ENCODE measurements at regions of chr3 and their contacts with region 1.

Region 1: GRCh38 chr3:189394599-189395121 is 222.9 kb downstream of the TPRG1 start:
- DNase-seq: no peak
- H3K4me3 Mint-ChIP-seq: no peak overlapping the region
- H3K27ac Mint-ChIP-seq: no peak overlapping the region
- H3K4me1 Mint-ChIP-seq: peaks cover 32% of the 10 kb centered on the region
- H3K27me3 Mint-ChIP-seq: no peaks in the 10 kb centered on the region
- CTCF ChIP-seq: no peak

Region 2: GRCh38 chr3:189276481-189277219 is 118.0 kb before region 1 on chr3:
- CTCF ChIA-PET with region 1: interaction called, 6 read pairs
- POLR2A ChIA-PET with region 1: interaction called, 19 read pairs
- intact Hi-C with region 1: no loop called
- DNase-seq: peak; percentile 95
- H3K4me3 Mint-ChIP-seq: peak overlapping the region; percentile 30
- H3K27ac Mint-ChIP-seq: peak overlapping the region; percentile 50
- H3K4me1 Mint-ChIP-seq: peaks cover 41% of the 10 kb centered on the region
- H3K27me3 Mint-ChIP-seq: no peaks in the 10 kb centered on the region
- CTCF ChIP-seq: no peak

Region 3: DNA sequence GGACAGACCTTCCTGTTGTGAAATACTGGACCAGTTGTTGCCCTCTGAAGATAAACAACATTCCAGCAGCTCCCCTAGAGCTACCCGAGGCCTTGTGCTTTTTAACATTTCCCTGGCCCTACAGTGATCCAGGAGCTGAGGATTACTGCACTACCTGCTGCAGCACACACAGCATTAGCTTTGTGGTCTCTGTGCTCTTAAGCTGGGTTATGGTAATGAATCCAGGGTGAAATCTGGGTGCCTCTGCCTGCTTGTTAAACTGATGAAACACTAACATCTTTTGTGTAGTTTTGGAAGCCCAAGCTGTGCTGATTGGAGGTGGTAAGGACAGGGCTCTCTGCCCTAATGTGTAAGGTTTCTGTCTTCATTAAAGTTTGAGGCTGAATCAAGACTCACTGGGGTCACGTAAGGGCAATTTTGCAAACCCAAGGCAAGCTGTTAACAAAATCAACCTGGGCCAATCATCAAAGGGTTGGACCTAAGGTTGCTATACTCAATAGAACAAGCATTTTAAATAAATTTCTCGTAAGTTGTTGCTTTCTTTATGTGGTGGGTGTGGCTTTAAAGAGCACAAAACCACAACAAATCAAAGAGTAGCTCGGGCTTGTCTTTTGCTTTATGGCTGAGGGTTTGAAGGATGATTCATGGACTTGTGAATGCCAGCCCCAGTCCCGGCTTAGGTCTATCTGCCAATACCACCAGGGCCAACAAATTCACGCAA is 39.0 kb before region 1 on chr3:
- CTCF ChIA-PET with region 1: interaction called, 9 read pairs
- POLR2A ChIA-PET with region 1: interaction called, 72 read pairs
- intact Hi-C with region 1: loop called (anchors 2 kb)
- DNase-seq: peak; percentile 93
- H3K4me3 Mint-ChIP-seq: no peak overlapping the region
- H3K27ac Mint-ChIP-seq: peak overlapping the region; percentile 96
- H3K4me1 Mint-ChIP-seq: peaks cover 36% of the 10 kb centered on the region
- H3K27me3 Mint-ChIP-seq: no peaks in the 10 kb centered on the region
- CTCF ChIP-seq: no peak

Region 4: GRCh38 chr3:189488241-189488767 is 93.6 kb after region 1 on chr3:
- CTCF ChIA-PET with region 1: no interaction called
- POLR2A ChIA-PET with region 1: interaction called, 22 read pairs
- intact Hi-C with region 1: loop called (anchors 5 kb)
- DNase-seq: peak; percentile 97
- H3K4me3 Mint-ChIP-seq: peak overlapping the region; percentile 38
- H3K27ac Mint-ChIP-seq: peak overlapping the region; percentile 80
- H3K4me1 Mint-ChIP-seq: peaks cover 34% of the 10 kb centered on the region
- H3K27me3 Mint-ChIP-seq: no peaks in the 10 kb centered on the region
- CTCF ChIP-seq: no peak

Region 5: GRCh38 chr3:189786479-189787064 is 391.9 kb after region 1 on chr3:
- CTCF ChIA-PET with region 1: no interaction called
- POLR2A ChIA-PET with region 1: interaction called, 14 read pairs
- intact Hi-C with region 1: no loop called
- DNase-seq: no peak
- H3K4me3 Mint-ChIP-seq: no peak overlapping the region
- H3K27ac Mint-ChIP-seq: no peak overlapping the region
- H3K4me1 Mint-ChIP-seq: peaks cover 5% of the 10 kb centered on the region
- H3K27me3 Mint-ChIP-seq: no peaks in the 10 kb centered on the region
- CTCF ChIP-seq: peak; percentile 20

Region 6: DNA sequence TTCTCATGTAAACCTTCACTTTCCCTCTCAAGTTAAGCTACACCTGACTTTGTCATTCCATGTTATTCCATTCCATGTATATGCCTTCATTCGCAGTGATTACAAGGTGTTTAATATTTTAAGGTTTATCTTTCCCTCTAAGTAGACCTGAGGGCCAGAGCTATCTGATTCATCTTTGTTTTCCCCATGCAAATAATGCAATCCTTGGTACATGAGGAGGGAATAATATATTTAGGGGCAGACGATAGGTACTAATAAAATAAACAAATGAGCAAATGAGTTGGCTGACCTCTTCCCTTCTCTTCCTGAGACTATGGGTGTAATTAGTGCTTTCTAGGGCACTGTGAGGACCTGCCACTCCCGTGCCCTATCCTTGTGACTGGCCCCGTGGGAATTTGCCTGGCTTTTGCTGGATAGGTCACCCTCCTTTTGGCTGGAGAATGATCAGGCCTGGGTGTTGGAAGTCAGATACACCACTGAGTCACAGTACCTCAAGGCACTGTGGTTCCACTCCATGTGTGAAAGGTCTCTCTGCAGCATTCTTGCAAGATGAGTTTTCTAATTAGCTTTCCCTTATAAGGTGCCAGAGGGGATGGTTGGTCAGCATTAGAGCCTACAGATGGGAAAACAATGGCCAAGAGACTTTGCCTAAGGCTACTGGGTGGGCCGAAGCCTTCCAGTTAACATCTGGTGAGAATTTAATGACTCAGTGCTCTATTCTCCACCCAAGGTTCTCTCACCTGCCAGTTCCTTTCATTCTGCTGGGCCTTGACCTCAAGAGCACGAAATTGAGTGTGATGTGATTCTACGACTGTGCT is 542.9 kb after region 1 on chr3:
- CTCF ChIA-PET with region 1: interaction called, 3 read pairs
- POLR2A ChIA-PET with region 1: no interaction called
- intact Hi-C with region 1: loop called (anchors 2 kb)
- DNase-seq: peak; percentile 100
- H3K4me3 Mint-ChIP-seq: peak overlapping the region; percentile 33
- H3K27ac Mint-ChIP-seq: peak overlapping the region; percentile 95
- H3K4me1 Mint-ChIP-seq: peaks cover 39% of the 10 kb centered on the region
- H3K27me3 Mint-ChIP-seq: no peaks in the 10 kb centered on the region
- CTCF ChIP-seq: no peak

Measured in MCF 10A (cell line).